HepG2 (cell line): ENCODE measurements at regions of chr4 and their contacts with region 1.

Region 1: DNA sequence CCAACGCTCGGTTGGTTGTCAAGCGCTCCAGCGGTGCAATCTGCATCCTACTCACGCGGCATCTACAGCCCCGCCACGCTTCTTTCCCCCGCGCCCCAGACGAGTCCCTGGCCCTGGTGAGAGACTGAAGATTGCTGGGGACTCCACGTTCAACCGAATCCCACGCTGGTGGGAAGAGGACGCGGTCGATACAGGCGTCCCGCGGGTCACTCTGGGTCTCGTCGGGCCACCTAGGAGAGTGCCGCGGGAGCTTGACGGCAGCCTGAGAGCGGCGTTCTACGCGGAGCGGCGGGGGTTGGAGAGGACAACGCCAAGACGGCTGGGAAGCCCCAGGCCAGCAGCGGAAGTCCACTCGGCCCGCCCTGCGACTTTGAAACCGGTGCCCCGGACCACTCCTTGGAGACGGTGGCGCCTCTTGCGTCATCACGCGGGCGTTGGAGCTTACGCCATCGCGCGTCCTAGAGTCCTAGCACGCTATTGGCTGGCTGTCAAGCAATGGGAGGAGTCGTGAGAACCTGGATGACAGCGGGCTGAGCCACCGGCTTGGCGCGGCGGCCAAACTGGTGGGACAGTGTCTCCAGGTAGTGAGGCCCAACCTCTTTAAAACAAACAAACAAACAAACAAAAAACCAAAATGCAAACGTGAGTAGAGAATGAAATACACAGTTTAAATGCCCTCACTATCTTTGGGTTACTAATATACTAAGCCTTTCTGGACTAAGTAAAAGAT is at the start of gene SCLT1:
- DNase-seq: peak; percentile 92
- ATAC-seq: peak; percentile 97
- H3K4me3 ChIP-seq: peak within 1 kb of the TSS; percentile 70 to 94 (median 81)
- H3K27ac ChIP-seq: peak within 1 kb of the TSS; percentile 79
- H3K4me1 ChIP-seq: peaks cover 48% of the 10 kb centered on the region
- H3K27me3 ChIP-seq: no peaks in the 10 kb centered on the region; a peak in 1 of 5 replicates
- CTCF ChIP-seq: no peak
- EP300 ChIP-seq: no peak
- POLR2A ChIP-seq: peak; percentile 63 to 77
- RAD21 ChIP-seq: peak; percentile 43; the same call in 1 of the 2 replicates
- total RNA-seq, gene SCLT1: 8.0 and 8.7 TPM in 2 replicates

Region 2: DNA sequence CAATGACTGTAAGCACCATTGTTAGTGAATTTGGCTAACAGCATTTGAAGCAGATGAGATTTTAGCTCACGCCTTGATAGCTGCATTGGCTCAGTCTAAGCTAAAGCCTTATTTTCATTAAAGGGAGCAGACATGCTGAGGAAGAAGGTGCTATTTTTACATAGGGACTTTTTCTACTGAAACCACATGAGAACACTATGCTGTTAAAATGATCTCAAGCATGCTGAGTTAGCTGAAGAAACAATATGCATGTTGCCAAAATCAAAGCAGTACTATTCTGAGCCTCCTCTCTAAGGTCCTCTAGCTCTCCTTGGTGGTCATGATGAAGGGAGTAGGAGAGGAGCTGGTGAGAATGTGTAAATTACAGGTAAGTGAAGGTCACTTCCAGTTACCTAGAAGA is 418.3 kb before region 1 on chr4:
- CTCF ChIA-PET with region 1: no interaction called
- POLR2A ChIA-PET with region 1: no interaction called
- in situ Hi-C with region 1: no loop called
- intact Hi-C with region 1: no loop called
- DNase-seq: no peak
- ATAC-seq: no peak
- H3K4me3 ChIP-seq: no peak overlapping the region
- H3K27ac ChIP-seq: no peak overlapping the region
- H3K4me1 ChIP-seq: no peaks in the 10 kb centered on the region
- H3K27me3 ChIP-seq: no peaks in the 10 kb centered on the region
- CTCF ChIP-seq: no peak
- EP300 ChIP-seq: no peak
- POLR2A ChIP-seq: no peak
- RAD21 ChIP-seq: no peak

Region 3: GRCh38 chr4:128958202-128958601 is 135.2 kb before region 1 on chr4:
- CTCF ChIA-PET with region 1: no interaction called
- POLR2A ChIA-PET with region 1: no interaction called
- in situ Hi-C with region 1: no loop called
- intact Hi-C with region 1: loop called (anchors 5 kb)
- DNase-seq: peak; percentile 83
- ATAC-seq: peak; percentile 99
- H3K4me3 ChIP-seq: no peak overlapping the region
- H3K27ac ChIP-seq: peak overlapping the region; percentile 18
- H3K4me1 ChIP-seq: peaks cover 24% of the 10 kb centered on the region
- H3K27me3 ChIP-seq: no peaks in the 10 kb centered on the region
- CTCF ChIP-seq: no peak
- EP300 ChIP-seq: peak in 1 of 2 experiments; percentile 75; a peak in 2 of 4 replicates
- POLR2A ChIP-seq: no peak
- RAD21 ChIP-seq: no peak

Region 4: DNA sequence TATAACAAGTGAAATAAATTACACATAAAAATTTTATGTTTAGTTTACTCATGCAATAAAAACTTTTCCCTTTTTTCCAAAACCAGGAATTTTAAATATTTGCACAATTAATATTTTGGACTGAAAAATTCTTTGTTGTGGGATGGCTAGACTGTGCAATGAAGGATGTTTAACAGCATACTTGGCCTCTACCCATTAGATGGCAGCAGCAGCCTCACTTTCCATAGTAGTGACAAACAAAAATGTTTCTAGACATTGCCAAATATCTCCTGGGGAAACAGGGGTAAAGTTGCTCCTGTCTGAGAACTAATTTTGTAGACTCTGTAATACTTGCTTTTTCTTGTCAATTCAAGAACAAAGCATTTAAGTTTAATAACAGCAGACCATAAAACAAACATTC is 49.8 kb before region 1 on chr4:
- CTCF ChIA-PET with region 1: no interaction called
- POLR2A ChIA-PET with region 1: no interaction called
- in situ Hi-C with region 1: no loop called
- intact Hi-C with region 1: loop called (anchors 5 kb)
- DNase-seq: peak; percentile 7
- ATAC-seq: no peak
- H3K4me3 ChIP-seq: no peak overlapping the region
- H3K27ac ChIP-seq: no peak overlapping the region
- H3K4me1 ChIP-seq: no peaks in the 10 kb centered on the region
- H3K27me3 ChIP-seq: no peaks in the 10 kb centered on the region
- CTCF ChIP-seq: peak; percentile 38
- EP300 ChIP-seq: no peak
- POLR2A ChIP-seq: no peak
- RAD21 ChIP-seq: no peak